CD8-positive, alpha-beta T cell (primary cell): ENCODE measurements at regions of chr11 and their contacts with region 1.

Region 1: GRCh38 chr11:61899146-61899841 is 7.9 kb upstream of the FADS3 start:
- DNase-seq: peak; percentile 89 to 98 (median 92)
- ATAC-seq: peak; percentile 96
- H3K4me3 ChIP-seq: no peak overlapping the region
- H3K4me3 Mint-ChIP-seq: no peak overlapping the region
- H3K27ac ChIP-seq: no peak overlapping the region
- H3K27ac Mint-ChIP-seq: peak overlapping the region; percentile 3
- H3K4me1 ChIP-seq: peaks cover 5% of the 10 kb centered on the region
- H3K4me1 Mint-ChIP-seq: peaks cover 6% of the 10 kb centered on the region
- H3K27me3 ChIP-seq: no peaks in the 10 kb centered on the region
- H3K27me3 Mint-ChIP-seq: peaks cover 5% of the 10 kb centered on the region
- CTCF ChIP-seq: peak; percentile 98

Region 2: GRCh38 chr11:61816736-61817455 is 82.4 kb before region 1 on chr11 and contains the start of gene FADS1:
- CTCF ChIA-PET with region 1: interaction called, 11 read pairs
- POLR2A ChIA-PET with region 1: no interaction called
- intact Hi-C with region 1: loop called in 1 of 2 experiments (anchors 5 kb)
- DNase-seq: peak; percentile 26 to 87 (median 73)
- ATAC-seq: peak; percentile 60
- H3K4me3 ChIP-seq: peak within 1 kb of the TSS; percentile 57 to 73
- H3K4me3 Mint-ChIP-seq: peak within 1 kb of the TSS; percentile 94
- H3K27ac ChIP-seq: peak within 1 kb of the TSS; percentile 10 to 27
- H3K27ac Mint-ChIP-seq: peak within 1 kb of the TSS; percentile 71
- H3K4me1 ChIP-seq: peaks cover 12% of the 10 kb centered on the region
- H3K4me1 Mint-ChIP-seq: peaks cover 17% of the 10 kb centered on the region
- H3K27me3 ChIP-seq: peaks cover 0 to 3% of the 10 kb centered on the region in 2 experiments
- H3K27me3 Mint-ChIP-seq: no peaks in the 10 kb centered on the region
- CTCF ChIP-seq: no peak
- total RNA-seq, gene FADS1: 3.1 TPM

Region 3: DNA sequence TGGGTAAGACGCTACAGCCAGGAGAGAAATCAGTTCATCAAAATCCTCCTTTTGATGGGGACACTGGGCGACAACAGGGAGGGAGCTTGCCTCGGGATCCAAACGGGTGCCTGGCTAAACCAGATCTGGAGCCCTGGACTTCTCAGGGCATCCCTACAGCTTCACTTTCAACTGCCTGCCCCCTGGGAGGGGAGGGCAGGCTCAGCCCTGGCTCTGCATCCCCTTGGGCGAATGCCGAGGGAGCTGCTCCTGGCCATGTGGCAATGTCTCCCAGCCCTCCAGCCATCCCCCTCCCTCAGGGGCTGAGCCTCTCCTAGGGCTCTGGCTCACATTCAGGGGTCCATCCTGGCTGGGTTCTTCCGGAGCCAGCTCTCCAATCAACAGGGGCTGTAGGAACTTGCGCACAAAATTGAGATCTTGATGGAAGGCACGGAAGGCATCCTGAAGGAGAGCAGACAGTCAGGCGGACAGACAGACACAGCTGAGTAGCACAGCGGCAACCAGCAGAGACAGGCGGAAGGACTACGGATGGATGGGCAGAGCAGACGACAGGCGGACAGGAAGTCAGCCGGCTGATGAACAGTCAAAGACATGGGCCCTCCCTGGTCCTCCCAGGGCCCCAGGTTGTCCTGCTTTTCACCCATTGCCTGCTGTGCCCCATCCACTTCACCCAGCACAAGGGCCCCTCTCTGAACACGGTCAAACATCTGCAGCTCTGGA is 19.4 kb before region 1 on chr11:
- CTCF ChIA-PET with region 1: interaction called, 53 read pairs
- POLR2A ChIA-PET with region 1: no interaction called
- intact Hi-C with region 1: no loop called
- DNase-seq: no peak
- ATAC-seq: no peak
- H3K4me3 ChIP-seq: no peak overlapping the region
- H3K4me3 Mint-ChIP-seq: no peak overlapping the region
- H3K27ac ChIP-seq: no peak overlapping the region
- H3K27ac Mint-ChIP-seq: no peak overlapping the region
- H3K4me1 ChIP-seq: no peaks in the 10 kb centered on the region
- H3K4me1 Mint-ChIP-seq: no peaks in the 10 kb centered on the region
- H3K27me3 ChIP-seq: no peaks in the 10 kb centered on the region
- H3K27me3 Mint-ChIP-seq: no peaks in the 10 kb centered on the region
- CTCF ChIP-seq: no peak

Region 4: GRCh38 chr11:61912530-61912898 is 13.2 kb after region 1 on chr11:
- CTCF ChIA-PET with region 1: interaction called, 51 read pairs
- POLR2A ChIA-PET with region 1: no interaction called
- intact Hi-C with region 1: no loop called
- DNase-seq: peak in 1 of 9 experiments; percentile 24
- ATAC-seq: no peak
- H3K4me3 ChIP-seq: no peak overlapping the region
- H3K4me3 Mint-ChIP-seq: no peak overlapping the region
- H3K27ac ChIP-seq: no peak overlapping the region
- H3K27ac Mint-ChIP-seq: no peak overlapping the region
- H3K4me1 ChIP-seq: no peaks in the 10 kb centered on the region
- H3K4me1 Mint-ChIP-seq: peaks cover 2% of the 10 kb centered on the region
- H3K27me3 ChIP-seq: peaks cover 0 to 4% of the 10 kb centered on the region in 2 experiments
- H3K27me3 Mint-ChIP-seq: peaks cover 27% of the 10 kb centered on the region
- CTCF ChIP-seq: no peak

Region 5: GRCh38 chr11:61961570-61962212 is 62.4 kb after region 1 on chr11:
- CTCF ChIA-PET with region 1: interaction called, 10 read pairs
- POLR2A ChIA-PET with region 1: no interaction called
- intact Hi-C with region 1: loop called in 1 of 2 experiments (anchors 5 kb)
- DNase-seq: peak in 1 of 9 experiments; percentile 26
- ATAC-seq: no peak
- H3K4me3 ChIP-seq: no peak overlapping the region
- H3K4me3 Mint-ChIP-seq: no peak overlapping the region
- H3K27ac ChIP-seq: no peak overlapping the region
- H3K27ac Mint-ChIP-seq: peak overlapping the region; percentile 8
- H3K4me1 ChIP-seq: peaks cover 36% of the 10 kb centered on the region
- H3K4me1 Mint-ChIP-seq: peaks cover 34% of the 10 kb centered on the region
- H3K27me3 ChIP-seq: no peaks in the 10 kb centered on the region
- H3K27me3 Mint-ChIP-seq: no peaks in the 10 kb centered on the region
- CTCF ChIP-seq: no peak

Region 6: GRCh38 chr11:62054484-62055121 is 155.3 kb after region 1 on chr11:
- CTCF ChIA-PET with region 1: interaction called, 6 read pairs
- POLR2A ChIA-PET with region 1: no interaction called
- intact Hi-C with region 1: loop called in 1 of 2 experiments (anchors 1 kb)
- DNase-seq: peak in 5 of 9 experiments; percentile 10 to 61 (median 37)
- ATAC-seq: no peak
- H3K4me3 ChIP-seq: no peak overlapping the region
- H3K4me3 Mint-ChIP-seq: no peak overlapping the region
- H3K27ac ChIP-seq: no peak overlapping the region
- H3K27ac Mint-ChIP-seq: no peak overlapping the region
- H3K4me1 ChIP-seq: no peaks in the 10 kb centered on the region
- H3K4me1 Mint-ChIP-seq: no peaks in the 10 kb centered on the region
- H3K27me3 ChIP-seq: no peaks in the 10 kb centered on the region
- H3K27me3 Mint-ChIP-seq: no peaks in the 10 kb centered on the region
- CTCF ChIP-seq: no peak